ENCODE measurements at regions of chr12 and their contacts with region 1.

Region 1: DNA sequence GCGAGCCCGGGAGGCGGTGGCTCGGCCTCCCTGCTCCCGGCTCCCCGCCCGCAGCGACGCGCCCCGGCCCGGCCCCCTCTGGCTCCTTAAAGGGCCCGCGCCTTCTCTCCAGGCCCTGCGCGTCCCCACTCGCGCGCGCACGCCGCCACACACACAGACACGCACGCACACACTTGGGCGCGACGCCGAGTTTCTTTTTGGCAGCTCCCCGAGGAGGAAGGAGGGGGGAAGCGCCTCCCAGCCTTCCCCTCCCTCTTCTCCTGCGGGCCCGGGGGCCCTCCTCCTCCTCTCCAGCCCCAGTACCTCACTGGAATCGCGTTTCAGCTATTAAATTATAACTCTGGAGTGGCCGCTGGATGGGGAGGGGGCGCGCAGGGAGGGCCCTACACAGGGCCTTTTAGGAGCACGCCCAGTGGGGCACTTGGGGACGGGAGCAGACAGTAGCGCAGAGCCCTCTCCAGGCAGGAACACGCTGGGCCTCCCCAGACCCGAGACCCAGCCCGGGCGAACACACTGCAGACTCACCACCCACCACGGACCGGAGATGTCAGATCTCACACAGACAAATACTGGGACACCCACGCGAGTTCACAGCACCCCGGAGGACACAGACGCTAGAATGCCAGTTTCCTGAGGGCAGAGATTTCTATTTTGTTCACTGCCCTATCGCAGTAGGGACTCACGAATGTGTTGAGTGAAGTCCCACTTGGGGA is 405 bp upstream of the NCOR2 start:
- DNase-seq: peak; percentile 79 to 84
- H3K4me3 ChIP-seq: peak overlapping the region; percentile 57
- H3K4me3 Mint-ChIP-seq: peak overlapping the region; percentile 77
- H3K27ac Mint-ChIP-seq: peak overlapping the region; percentile 72
- H3K4me1 ChIP-seq: peaks cover 6% of the 10 kb centered on the region
- H3K4me1 Mint-ChIP-seq: no peaks in the 10 kb centered on the region
- H3K27me3 ChIP-seq: no peaks in the 10 kb centered on the region
- H3K27me3 Mint-ChIP-seq: no peaks in the 10 kb centered on the region
- CTCF ChIP-seq: no peak

Region 2: GRCh38 chr12:124588751-124589267 is 21.0 kb after region 1 on chr12:
- CTCF ChIA-PET with region 1: no interaction called
- POLR2A ChIA-PET with region 1: no interaction called
- intact Hi-C with region 1: no loop called
- DNase-seq: no peak
- H3K4me3 ChIP-seq: no peak overlapping the region
- H3K4me3 Mint-ChIP-seq: no peak overlapping the region
- H3K27ac Mint-ChIP-seq: no peak overlapping the region
- H3K4me1 ChIP-seq: peaks cover 8% of the 10 kb centered on the region; the same call in 1 of the 2 replicates
- H3K4me1 Mint-ChIP-seq: peaks cover 6% of the 10 kb centered on the region
- H3K27me3 ChIP-seq: no peaks in the 10 kb centered on the region
- H3K27me3 Mint-ChIP-seq: no peaks in the 10 kb centered on the region
- CTCF ChIP-seq: no peak

Region 3: DNA sequence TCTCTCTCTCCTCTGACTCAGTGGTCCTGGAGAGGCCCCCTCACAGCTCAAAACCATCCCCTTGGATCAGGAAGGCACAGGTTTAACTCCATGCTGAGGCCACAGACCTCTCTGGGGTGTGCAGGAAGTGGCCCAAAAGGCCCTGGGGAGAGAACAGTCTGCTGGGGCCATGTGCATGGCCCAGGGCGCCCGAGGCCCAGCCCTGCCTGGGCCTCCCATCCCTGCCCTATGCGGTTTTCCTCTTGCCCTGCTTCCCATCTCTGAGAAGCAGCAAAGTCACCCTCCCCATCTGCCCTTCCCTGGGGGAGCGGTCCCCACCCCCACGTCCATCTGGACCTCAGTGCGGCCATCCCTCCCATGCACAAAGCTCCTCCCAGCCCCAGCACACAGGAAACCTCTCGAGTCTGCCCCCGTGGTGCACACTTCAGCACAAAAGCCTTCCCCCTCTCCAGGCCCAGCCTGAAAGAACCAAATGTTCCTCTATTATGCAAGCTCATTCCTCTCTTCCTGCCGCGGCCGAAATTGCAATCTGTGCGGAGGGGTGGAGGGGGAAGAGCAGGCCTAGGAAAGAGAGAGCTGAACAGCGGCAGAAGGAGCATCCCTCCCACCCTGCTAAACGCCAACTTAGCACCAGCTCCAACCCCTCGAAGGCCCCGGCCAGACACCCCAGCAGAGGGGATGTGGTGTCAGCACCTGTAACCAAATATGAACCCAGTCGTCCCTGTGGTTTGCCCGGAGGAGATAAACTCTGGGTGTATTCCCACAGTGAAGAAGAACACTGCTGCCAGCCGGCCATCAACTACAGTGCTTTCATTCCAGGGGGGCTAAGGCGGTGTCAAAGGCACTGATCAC is 187.4 kb after region 1 on chr12:
- CTCF ChIA-PET with region 1: no interaction called
- POLR2A ChIA-PET with region 1: no interaction called
- intact Hi-C with region 1: loop called (anchors 5 kb)
- DNase-seq: no peak
- H3K4me3 ChIP-seq: no peak overlapping the region
- H3K4me3 Mint-ChIP-seq: no peak overlapping the region
- H3K27ac Mint-ChIP-seq: no peak overlapping the region
- H3K4me1 ChIP-seq: no peaks in the 10 kb centered on the region
- H3K4me1 Mint-ChIP-seq: no peaks in the 10 kb centered on the region
- H3K27me3 ChIP-seq: no peaks in the 10 kb centered on the region; the same call in 1 of the 2 replicates
- H3K27me3 Mint-ChIP-seq: peaks cover 3% of the 10 kb centered on the region
- CTCF ChIP-seq: no peak

Region 4: GRCh38 chr12:124767066-124767821 is 199.4 kb after region 1 on chr12:
- CTCF ChIA-PET with region 1: no interaction called
- POLR2A ChIA-PET with region 1: no interaction called
- intact Hi-C with region 1: loop called (anchors 2 kb)
- DNase-seq: peak; percentile 74 to 88
- H3K4me3 ChIP-seq: no peak overlapping the region
- H3K4me3 Mint-ChIP-seq: no peak overlapping the region
- H3K27ac Mint-ChIP-seq: no peak overlapping the region
- H3K4me1 ChIP-seq: peaks cover 19% of the 10 kb centered on the region; the same call in 1 of the 2 replicates
- H3K4me1 Mint-ChIP-seq: peaks cover 36% of the 10 kb centered on the region
- H3K27me3 ChIP-seq: no peaks in the 10 kb centered on the region
- H3K27me3 Mint-ChIP-seq: no peaks in the 10 kb centered on the region
- CTCF ChIP-seq: peak; percentile 93 to 99

Measured in Caco-2 (cell line).